ENCODE measurements at regions of chr18 and their contacts with region 1.

Region 1: DNA sequence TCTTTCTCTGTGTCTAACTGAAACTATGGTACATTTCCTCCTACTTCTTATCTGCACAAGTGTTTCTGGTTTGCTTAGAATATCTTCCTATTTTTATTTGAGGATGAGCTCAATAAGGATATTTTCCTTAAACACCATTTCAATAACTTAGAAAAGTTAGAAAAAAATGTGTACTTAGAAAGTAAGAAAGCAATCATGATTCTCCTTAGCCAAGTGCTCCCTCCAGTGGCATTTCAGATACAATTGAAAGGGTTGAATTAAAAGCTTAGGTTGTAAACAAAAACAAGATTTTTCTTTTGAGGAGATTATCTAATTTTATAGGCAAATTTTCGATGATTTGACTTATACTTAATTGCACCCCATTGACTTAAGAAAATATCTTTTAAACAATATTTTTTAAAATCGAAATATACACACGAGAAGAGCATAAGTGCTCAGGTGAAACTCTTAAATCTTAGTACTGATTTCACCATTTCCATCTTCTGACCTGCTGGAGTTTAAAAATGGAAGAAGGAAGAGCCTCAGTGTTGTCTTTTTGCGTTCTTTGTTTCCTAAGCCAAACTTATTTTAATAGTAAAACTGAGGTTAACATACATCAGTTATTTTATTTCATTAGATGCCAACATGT is 26.9 kb downstream of the C18orf63 start:
- DNase-seq: peak; percentile 56
- H3K4me3 Mint-ChIP-seq: no peak overlapping the region
- H3K27ac Mint-ChIP-seq: no peak overlapping the region
- H3K4me1 Mint-ChIP-seq: no peaks in the 10 kb centered on the region
- H3K27me3 Mint-ChIP-seq: peaks cover 2% of the 10 kb centered on the region

Region 2: GRCh38 chr18:74040459-74041332 is 301.8 kb before region 1 on chr18:
- CTCF ChIA-PET with region 1: no interaction called
- intact Hi-C with region 1: loop called (anchors 1 kb)
- DNase-seq: peak; percentile 87
- H3K4me3 Mint-ChIP-seq: no peak overlapping the region
- H3K27ac Mint-ChIP-seq: no peak overlapping the region
- H3K4me1 Mint-ChIP-seq: no peaks in the 10 kb centered on the region
- H3K27me3 Mint-ChIP-seq: peaks cover 2% of the 10 kb centered on the region

Region 3: DNA sequence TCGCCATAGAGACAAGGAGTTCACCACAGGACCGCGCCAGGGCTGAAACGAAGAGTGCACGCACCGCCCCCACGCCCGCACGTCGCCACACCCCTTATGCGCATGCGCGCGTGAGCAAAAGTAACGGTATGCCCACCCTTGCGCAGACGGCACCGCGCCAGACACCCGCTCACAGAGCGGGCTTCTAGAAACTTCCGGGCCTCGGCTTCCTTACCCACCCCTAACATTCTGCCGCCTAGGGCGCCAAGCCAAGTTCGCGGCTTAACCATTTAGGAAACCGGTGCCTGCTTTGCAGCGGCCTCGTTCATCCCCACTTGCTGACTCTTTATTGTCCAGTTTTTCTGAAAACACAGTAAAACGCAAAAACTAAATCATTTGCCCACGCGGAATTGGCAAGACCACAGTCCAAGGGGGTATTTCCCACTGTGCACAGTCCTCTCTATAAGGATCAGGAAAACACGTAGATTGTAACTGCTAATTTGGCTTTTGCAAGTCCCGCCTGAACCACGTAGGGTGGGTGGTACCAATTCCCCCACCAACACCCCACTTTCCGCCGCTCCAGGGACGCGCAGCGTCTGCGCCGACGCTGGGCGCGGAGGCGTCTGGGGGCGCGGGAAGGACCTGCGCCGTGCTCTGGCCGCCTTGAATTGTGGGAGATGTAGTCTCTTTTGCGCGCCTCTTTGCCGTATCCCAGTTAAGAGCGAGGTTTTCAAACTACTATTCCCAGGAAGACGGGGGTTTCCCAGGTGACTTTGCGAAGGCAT is 194.6 kb before region 1 on chr18 and contains the starts of genes FBXO15 and TIMM21:
- CTCF ChIA-PET with region 1: no interaction called
- intact Hi-C with region 1: loop called (anchors 1 kb)
- DNase-seq: peak; percentile 95
- H3K4me3 Mint-ChIP-seq: peak within 1 kb of the TSS; percentile 96
- H3K27ac Mint-ChIP-seq: peak within 1 kb of the TSS; percentile 97
- H3K4me1 Mint-ChIP-seq: peaks cover 42% of the 10 kb centered on the region
- H3K27me3 Mint-ChIP-seq: no peaks in the 10 kb centered on the region
- total RNA-seq, gene FBXO15: 1.2 to 1.3 TPM
- total RNA-seq, gene TIMM21: 35.6 to 37.7 TPM

Region 4: GRCh38 chr18:74196220-74197119 is 146.1 kb before region 1 on chr18:
- CTCF ChIA-PET with region 1: interaction called, 41 read pairs
- intact Hi-C with region 1: loop called (anchors 1 kb)
- DNase-seq: peak; percentile 64
- H3K4me3 Mint-ChIP-seq: peak overlapping the region; percentile 63
- H3K27ac Mint-ChIP-seq: peak overlapping the region; percentile 28
- H3K4me1 Mint-ChIP-seq: peaks cover 3% of the 10 kb centered on the region
- H3K27me3 Mint-ChIP-seq: peaks cover under 1% of the 10 kb centered on the region

Region 5: GRCh38 chr18:74242438-74243096 is 100.0 kb before region 1 on chr18:
- CTCF ChIA-PET with region 1: interaction called, 3 read pairs
- intact Hi-C with region 1: loop called (anchors 2 kb)
- DNase-seq: peak; percentile 18
- H3K4me3 Mint-ChIP-seq: no peak overlapping the region
- H3K27ac Mint-ChIP-seq: no peak overlapping the region
- H3K4me1 Mint-ChIP-seq: peaks cover under 1% of the 10 kb centered on the region
- H3K27me3 Mint-ChIP-seq: peaks cover 14% of the 10 kb centered on the region

Measured in activated naive CD4-positive, alpha-beta T cell treated with anti-CD3 and anti-CD28 coated beads for 36 hours (primary cell).